Endothelial cell of umbilical vein (primary cell): ENCODE measurements at regions of chr6 and their contacts with region 1.

Region 1: DNA sequence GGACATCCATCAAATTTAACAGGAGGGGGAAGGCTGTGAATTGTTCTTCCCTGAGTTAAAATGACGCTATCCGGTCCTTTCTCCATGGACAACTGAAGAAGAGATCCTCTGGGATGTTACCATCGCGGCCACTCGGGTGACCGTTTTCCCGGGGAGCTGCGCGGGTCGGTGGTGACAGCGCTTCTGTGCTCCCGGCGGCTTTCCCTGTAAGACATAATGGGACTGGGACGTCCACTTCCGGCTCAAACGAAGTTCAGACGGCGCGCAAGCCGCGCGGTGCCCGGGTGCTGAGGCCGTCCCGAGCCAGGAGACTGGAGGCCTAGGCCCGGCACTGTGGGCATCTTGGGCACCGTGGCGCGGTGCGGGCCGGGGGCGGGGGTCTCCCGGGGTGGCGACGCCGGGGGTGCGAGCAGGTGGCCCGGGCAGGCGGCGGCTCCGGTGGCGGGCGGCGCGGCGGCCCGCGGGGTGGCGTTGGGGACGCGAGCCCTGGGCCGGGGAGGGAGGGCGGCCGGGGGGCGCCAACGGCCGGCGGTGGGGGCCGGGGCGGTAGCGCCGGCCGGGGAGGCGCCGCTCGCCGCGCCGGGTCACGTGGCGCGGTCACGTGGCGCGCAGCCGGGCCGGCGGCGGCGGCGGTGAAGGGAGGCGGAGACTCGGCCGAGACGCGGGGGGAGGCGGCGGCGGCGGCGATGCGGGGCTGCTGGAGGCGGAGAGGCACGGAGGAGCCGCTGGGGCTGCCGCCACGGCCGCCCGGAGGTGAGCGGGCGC is 63.6 kb downstream of the GTF2H5 start:
- DNase-seq: peak; percentile 53
- H3K4me3 ChIP-seq: peak overlapping the region; percentile 9 to 71 (median 43)
- H3K27ac ChIP-seq: peak overlapping the region; percentile 63
- H3K4me1 ChIP-seq: peaks cover 17% of the 10 kb centered on the region
- H3K27me3 ChIP-seq: no peaks in the 10 kb centered on the region
- CTCF ChIP-seq: no peak
- POLR2A ChIP-seq: no peak

Region 2: GRCh38 chr6:158251565-158251964 is 19.8 kb after region 1 on chr6:
- CTCF ChIA-PET with region 1: interaction called, 4 read pairs
- POLR2A ChIA-PET with region 1: interaction called, 3 read pairs
- dilution Hi-C with region 1: no loop called
- intact Hi-C with region 1: loop called (anchors 2 kb)
- DNase-seq: no peak
- H3K4me3 ChIP-seq: no peak overlapping the region
- H3K27ac ChIP-seq: no peak overlapping the region
- H3K4me1 ChIP-seq: no peaks in the 10 kb centered on the region
- H3K27me3 ChIP-seq: no peaks in the 10 kb centered on the region
- CTCF ChIP-seq: no peak
- POLR2A ChIP-seq: no peak

Region 3: DNA sequence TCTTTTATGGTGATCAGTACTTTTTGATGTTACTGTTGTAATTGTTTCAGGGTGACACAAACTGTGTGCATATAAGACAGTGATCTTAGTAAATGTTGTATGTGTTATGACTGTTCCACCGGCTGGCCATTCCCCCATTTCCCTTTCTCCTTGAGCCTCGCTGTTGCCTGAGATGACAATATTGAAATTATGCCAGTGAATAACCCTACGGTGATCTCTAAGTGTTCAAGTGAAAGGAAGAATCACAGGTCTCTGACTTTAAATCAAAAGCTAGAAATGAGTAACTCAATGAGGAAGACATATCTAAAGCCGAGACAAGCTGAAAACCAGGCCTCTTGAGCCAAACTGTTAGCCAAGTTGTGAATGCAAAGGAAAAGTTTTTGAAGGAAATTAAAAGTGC is 112.8 kb after region 1 on chr6:
- CTCF ChIA-PET with region 1: no interaction called
- POLR2A ChIA-PET with region 1: no interaction called
- dilution Hi-C with region 1: no loop called
- intact Hi-C with region 1: no loop called
- DNase-seq: no peak
- H3K4me3 ChIP-seq: no peak overlapping the region
- H3K27ac ChIP-seq: no peak overlapping the region
- H3K4me1 ChIP-seq: no peaks in the 10 kb centered on the region
- H3K27me3 ChIP-seq: no peaks in the 10 kb centered on the region
- CTCF ChIP-seq: no peak
- POLR2A ChIP-seq: no peak